ENCODE measurements at regions of chr12 and their contacts with region 1.

Region 1: DNA sequence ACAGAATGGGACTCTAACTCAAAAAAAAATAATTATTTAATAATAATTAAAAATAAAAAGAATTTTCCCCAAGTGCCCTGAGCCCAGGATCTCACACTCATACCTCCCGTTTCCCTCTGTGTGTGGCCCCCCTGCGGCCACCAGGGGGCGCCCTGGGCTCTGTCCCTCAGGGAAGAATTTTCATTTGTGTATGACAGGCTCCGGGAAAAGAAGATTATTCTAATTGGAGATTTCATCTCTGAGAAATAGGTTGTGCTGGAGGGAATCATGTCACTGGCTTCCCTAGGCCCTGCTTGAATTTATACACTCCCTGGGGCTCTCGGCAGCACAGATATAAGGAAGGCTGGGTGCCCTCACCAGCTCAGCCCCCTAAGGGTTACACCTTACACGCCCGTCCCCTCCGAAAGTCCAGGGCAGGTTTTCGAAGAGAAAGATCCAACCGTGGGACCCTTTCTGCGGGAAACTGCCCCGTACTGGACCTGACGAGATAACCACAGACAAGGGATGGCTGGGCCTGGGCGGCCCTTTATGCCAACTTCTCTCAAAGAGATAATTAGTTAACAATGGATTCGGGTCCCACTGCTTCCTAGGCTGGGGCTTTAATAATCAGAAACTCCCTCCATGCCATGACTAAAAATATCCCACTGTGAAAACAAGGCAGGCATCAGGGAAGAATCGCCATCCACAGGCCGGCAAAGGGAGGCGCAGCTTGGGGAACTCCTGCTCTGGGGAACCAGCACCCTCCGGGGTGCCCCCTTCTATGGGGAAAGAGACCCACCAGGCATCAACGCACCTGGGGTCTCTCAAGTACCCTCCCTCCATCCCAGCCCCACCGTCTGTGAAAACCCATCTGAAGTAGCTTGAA is 80.7 kb downstream of the KDM2B start:
- DNase-seq: peak; percentile 83
- ATAC-seq: peak; percentile 96
- H3K4me3 ChIP-seq: no peak overlapping the region
- H3K27ac ChIP-seq: no peak overlapping the region
- H3K4me1 ChIP-seq: no peaks in the 10 kb centered on the region
- H3K27me3 ChIP-seq: no peaks in the 10 kb centered on the region
- CTCF ChIP-seq: peak; percentile 91

Region 2: DNA sequence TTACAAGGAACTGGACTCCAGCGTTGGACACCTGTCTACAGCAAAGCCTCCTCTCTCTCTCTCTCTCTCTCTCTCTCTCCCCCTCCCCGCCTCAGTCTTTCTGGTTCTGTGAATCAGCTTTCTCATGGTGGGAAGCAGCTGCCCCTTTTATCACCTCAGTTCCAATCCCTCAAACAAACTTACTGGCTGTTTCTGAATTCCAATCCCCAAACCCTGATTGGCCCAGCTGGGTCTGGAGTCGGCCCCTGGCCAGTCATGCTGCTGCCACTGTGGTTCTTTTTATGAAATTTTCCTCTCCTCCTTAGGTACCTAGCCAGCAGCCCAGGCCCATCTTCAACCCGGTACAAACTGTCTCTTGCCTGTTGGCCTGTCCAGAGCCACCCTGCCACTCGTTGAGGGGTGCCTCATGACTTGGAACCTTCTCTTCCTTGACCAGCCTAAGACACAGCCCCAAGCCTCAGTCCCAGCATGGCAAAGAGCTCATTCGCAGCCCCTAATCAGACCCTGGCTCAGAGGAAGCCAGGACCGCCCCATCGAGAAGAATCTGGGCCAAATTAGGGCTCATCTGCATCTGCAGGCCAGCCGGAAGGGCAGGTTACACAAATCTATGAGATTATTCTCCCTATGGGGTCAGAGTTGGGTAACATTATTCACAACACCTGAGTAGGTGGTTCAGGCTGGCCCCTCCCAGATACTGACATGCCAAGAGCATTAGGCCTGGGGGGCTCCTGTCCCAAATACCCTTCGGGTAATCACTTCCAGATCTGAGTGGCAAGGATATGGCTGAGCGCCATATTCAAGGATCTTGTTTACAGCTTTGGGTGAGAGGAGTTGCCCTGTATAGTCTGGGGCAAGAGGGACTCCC is 178.8 kb after region 1 on chr12:
- CTCF ChIA-PET with region 1: interaction called, 5 read pairs
- POLR2A ChIA-PET with region 1: no interaction called
- intact Hi-C with region 1: loop called (anchors 2 kb)
- DNase-seq: no peak
- ATAC-seq: no peak; the same call in 1 of the 2 replicates
- H3K4me3 ChIP-seq: no peak overlapping the region
- H3K27ac ChIP-seq: no peak overlapping the region
- H3K4me1 ChIP-seq: no peaks in the 10 kb centered on the region
- H3K27me3 ChIP-seq: no peaks in the 10 kb centered on the region
- CTCF ChIP-seq: no peak